ENCODE measurements at regions of chr12 and their contacts with region 1.

Region 1: GRCh38 chr12:20175704-20176388 is 192.5 kb upstream of the PDE3A start:
- DNase-seq: no peak
- ATAC-seq: no peak
- H3K4me3 ChIP-seq: no peak overlapping the region
- H3K4me3 Mint-ChIP-seq: no peak overlapping the region
- H3K27ac ChIP-seq: no peak overlapping the region
- H3K27ac Mint-ChIP-seq: no peak overlapping the region
- H3K4me1 ChIP-seq: no peaks in the 10 kb centered on the region
- H3K4me1 Mint-ChIP-seq: no peaks in the 10 kb centered on the region
- H3K27me3 ChIP-seq: no peaks in the 10 kb centered on the region
- H3K27me3 Mint-ChIP-seq: no peaks in the 10 kb centered on the region

Region 2: GRCh38 chr12:19856389-19856788 is 319.5 kb before region 1 on chr12:
- CTCF ChIA-PET with region 1: interaction called in 1 of 2 experiments, 13 read pairs
- POLR2A ChIA-PET with region 1: no interaction called
- DNase-seq: no peak
- ATAC-seq: no peak
- H3K4me3 ChIP-seq: no peak overlapping the region
- H3K4me3 Mint-ChIP-seq: no peak overlapping the region
- H3K27ac ChIP-seq: no peak overlapping the region
- H3K27ac Mint-ChIP-seq: no peak overlapping the region
- H3K4me1 ChIP-seq: no peaks in the 10 kb centered on the region
- H3K4me1 Mint-ChIP-seq: no peaks in the 10 kb centered on the region
- H3K27me3 ChIP-seq: no peaks in the 10 kb centered on the region
- H3K27me3 Mint-ChIP-seq: peaks cover 3 to 11% of the 10 kb centered on the region in 2 donors

Region 3: GRCh38 chr12:20154060-20154459 is 21.8 kb before region 1 on chr12:
- CTCF ChIA-PET with region 1: no interaction called
- POLR2A ChIA-PET with region 1: no interaction called
- DNase-seq: no peak
- ATAC-seq: no peak
- H3K4me3 ChIP-seq: no peak overlapping the region
- H3K4me3 Mint-ChIP-seq: no peak overlapping the region
- H3K27ac ChIP-seq: no peak overlapping the region
- H3K27ac Mint-ChIP-seq: no peak overlapping the region
- H3K4me1 ChIP-seq: no peaks in the 10 kb centered on the region
- H3K4me1 Mint-ChIP-seq: no peaks in the 10 kb centered on the region
- H3K27me3 ChIP-seq: no peaks in the 10 kb centered on the region
- H3K27me3 Mint-ChIP-seq: no peaks in the 10 kb centered on the region